Ascending aorta (tissue), 2 donors: ENCODE measurements at regions of chr1 and their contacts with region 1.

Region 1: GRCh38 chr1:154272217-154272998 is at the start of gene HAX1:
- DNase-seq: peak; percentile 87 to 97
- H3K4me3 ChIP-seq: peak within 1 kb of the TSS; percentile 75 to 97
- H3K27ac ChIP-seq: peak within 1 kb of the TSS; percentile 81 to 96
- H3K4me1 ChIP-seq: peaks cover 0 to 5% of the 10 kb centered on the region in 2 donors
- H3K27me3 ChIP-seq: no peaks in the 10 kb centered on the region
- CTCF ChIP-seq: peak; percentile 75 to 90 (median 89)
- total RNA-seq, gene HAX1: 270 TPM

Region 2: GRCh38 chr1:154183045-154183915 is 89.1 kb before region 1 on chr1:
- intact Hi-C with region 1: loop called (anchors 5 kb)
- DNase-seq: peak; percentile 85 to 98
- H3K4me3 ChIP-seq: peak overlapping the region; percentile 76 to 88
- H3K27ac ChIP-seq: peak overlapping the region; percentile 81 to 89
- H3K4me1 ChIP-seq: peaks cover 17 to 32% of the 10 kb centered on the region in 2 donors
- H3K27me3 ChIP-seq: no peaks in the 10 kb centered on the region
- CTCF ChIP-seq: peak in 1 of 3 experiments; percentile 23

Region 3: DNA sequence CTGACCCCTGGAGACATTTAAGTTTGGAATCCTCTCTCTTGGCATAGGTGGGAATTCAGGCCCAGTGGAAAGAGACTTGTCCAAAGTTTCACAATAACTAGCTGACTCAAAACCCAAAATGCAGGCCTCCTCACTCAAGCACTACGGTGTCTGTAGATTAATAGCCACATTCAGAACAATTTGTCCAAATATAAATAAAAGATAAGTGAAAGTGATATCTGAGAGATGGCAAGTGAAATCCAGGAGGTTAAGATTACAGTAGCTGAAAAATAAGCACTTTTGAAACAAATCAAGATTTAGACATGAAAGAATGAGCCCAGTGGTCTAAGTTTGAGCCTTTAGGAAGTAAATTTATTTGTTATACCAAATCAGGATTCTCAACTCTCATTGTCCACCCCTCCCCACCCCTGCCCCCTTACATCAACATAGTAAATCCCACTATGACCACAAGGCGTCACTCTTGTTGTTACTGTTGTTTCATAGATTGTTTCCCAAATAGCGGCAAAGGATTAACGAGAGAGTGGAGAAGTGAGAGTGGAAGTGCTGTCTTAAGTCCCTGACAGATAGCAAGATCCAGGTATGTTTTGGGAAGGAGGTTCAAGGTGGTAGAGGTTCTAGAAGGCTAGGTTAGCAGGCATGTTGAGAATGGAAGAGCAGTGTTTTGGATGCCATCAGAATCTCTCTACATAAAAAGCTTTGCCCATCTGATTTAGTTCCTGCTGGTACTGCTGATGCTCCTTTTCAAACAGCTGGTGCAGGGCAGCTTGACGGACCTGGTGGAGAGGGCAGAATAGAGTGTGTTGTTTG is 73.4 kb before region 1 on chr1:
- intact Hi-C with region 1: loop called (anchors 1 kb)
- DNase-seq: peak in 1 of 2 donors; percentile 77
- H3K4me3 ChIP-seq: peak overlapping the region in 1 of 2 donors; percentile 22
- H3K27ac ChIP-seq: peak overlapping the region in 1 of 2 donors; percentile 26
- H3K4me1 ChIP-seq: no peaks in the 10 kb centered on the region
- H3K27me3 ChIP-seq: no peaks in the 10 kb centered on the region
- CTCF ChIP-seq: peak; percentile 23 to 52 (median 50)

Region 4: GRCh38 chr1:154220071-154220969 is 52.1 kb before region 1 on chr1 and contains the start of gene UBAP2L:
- intact Hi-C with region 1: loop called (anchors 1 kb)
- DNase-seq: peak; percentile 96 to 100
- H3K4me3 ChIP-seq: peak within 1 kb of the TSS; percentile 78 to 98
- H3K27ac ChIP-seq: peak within 1 kb of the TSS; percentile 96 to 98
- H3K4me1 ChIP-seq: peaks cover 20 to 25% of the 10 kb centered on the region in 2 donors
- H3K27me3 ChIP-seq: no peaks in the 10 kb centered on the region
- CTCF ChIP-seq: no peak
- total RNA-seq, gene UBAP2L: 67.8 TPM

Region 5: DNA sequence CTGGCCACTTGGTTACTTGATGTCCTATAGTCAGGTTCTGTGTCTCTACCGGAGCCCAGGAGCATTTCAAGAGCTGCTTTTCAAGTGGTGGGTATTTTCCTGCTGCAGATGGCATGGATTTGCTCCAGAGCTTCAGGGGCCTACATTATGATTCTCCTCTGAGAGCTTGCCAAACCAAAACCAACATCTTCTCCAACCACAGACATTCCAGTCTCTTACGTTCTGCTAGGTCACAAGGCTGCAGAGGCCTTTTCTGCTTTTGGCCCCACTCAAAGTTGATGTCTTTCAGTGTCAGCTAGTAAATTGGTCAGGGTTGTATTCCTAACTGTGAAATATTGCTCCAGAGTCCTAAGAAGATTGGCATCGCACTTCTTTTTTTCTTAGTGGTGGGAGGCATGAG is 33.7 kb after region 1 on chr1:
- intact Hi-C with region 1: no loop called
- DNase-seq: no peak
- H3K4me3 ChIP-seq: no peak overlapping the region
- H3K27ac ChIP-seq: no peak overlapping the region
- H3K4me1 ChIP-seq: no peaks in the 10 kb centered on the region
- H3K27me3 ChIP-seq: no peaks in the 10 kb centered on the region
- CTCF ChIP-seq: no peak

Region 6: DNA sequence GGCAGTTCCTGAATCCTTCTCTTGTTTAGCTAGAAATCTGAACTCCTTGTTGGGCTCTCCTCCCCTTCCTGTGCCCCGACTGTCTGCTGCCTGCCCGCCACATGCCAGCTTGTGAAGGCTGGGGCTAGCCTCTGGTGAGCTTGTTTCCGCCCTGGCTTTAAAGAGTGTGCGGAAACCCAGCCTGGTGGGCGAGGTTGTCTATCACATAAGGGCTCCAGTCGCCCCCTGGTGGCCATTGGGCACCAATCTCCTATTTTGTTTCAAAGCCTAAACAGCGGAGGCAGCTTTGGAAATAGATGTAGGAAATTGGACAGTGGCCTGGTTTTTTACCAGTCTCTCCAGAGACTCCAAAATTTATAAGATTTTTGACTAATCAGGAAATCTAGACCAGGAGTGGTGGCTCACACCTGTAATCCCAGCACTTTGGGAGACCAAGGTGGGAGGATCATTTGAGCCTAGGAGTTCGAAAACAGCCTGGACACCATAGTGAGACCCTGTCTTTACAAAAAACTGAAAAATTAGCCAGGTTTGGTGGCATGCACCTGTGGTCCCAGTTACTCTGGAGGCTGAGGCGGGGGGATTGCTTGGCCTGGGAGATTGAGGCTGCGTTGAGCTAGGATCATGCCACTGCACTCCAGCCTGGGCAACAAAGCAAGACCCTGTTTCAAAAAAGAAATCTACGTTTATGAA is 62.8 kb after region 1 on chr1:
- intact Hi-C with region 1: loop called (anchors 2 kb)
- DNase-seq: peak; percentile 58 to 93
- H3K4me3 ChIP-seq: no peak overlapping the region
- H3K27ac ChIP-seq: peak overlapping the region; percentile 37 to 56
- H3K4me1 ChIP-seq: no peaks in the 10 kb centered on the region
- H3K27me3 ChIP-seq: no peaks in the 10 kb centered on the region
- CTCF ChIP-seq: peak; percentile 71 to 90 (median 82)

Region 7: DNA sequence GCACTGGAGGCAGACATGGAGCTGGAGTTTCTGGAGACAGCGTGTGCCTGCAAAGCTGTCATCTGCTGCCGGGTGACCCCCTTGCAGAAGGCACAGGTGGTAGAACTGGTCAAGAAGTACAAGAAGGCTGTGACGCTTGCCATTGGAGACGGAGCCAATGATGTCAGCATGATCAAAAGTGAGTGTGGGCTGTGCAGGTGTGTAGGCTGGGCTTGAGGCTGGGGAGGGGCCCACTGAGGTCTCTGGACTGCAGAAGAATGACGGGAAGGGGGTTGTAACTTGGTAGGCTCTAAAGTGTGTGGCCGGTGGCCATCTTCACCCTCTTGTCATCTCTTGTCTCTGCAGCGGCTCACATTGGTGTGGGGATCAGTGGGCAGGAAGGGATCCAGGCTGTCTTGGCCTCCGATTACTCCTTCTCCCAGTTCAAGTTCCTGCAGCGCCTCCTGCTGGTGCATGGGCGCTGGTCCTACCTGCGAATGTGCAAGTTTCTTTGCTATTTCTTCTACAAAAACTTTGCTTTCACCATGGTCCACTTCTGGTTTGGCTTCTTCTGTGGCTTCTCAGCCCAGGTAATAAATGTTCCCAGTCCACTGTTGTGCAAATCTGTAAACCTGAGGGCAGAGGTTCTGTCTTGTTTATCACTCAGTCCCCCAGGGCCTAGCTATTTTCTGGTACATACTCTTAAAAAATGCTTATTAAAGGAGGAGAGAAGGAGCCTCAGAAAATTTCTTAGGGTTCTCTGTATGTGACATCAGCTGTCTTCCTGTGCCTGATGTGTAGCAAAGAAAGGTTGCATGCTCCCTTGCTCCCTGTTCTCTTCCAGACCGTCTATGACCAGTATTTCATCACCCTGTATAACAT is 72.8 kb after region 1 on chr1:
- intact Hi-C with region 1: no loop called
- DNase-seq: peak in 1 of 2 donors; percentile 70
- H3K4me3 ChIP-seq: no peak overlapping the region
- H3K27ac ChIP-seq: no peak overlapping the region
- H3K4me1 ChIP-seq: no peaks in the 10 kb centered on the region
- H3K27me3 ChIP-seq: no peaks in the 10 kb centered on the region
- CTCF ChIP-seq: peak; percentile 29 to 51 (median 49)

Region 8: GRCh38 chr1:155961937-155962336 is 1689.5 kb after region 1 on chr1:
- intact Hi-C with region 1: no loop called
- DNase-seq: peak; percentile 79 to 95
- H3K4me3 ChIP-seq: peak overlapping the region in 1 of 2 donors; percentile 9
- H3K27ac ChIP-seq: peak overlapping the region; percentile 89 to 92
- H3K4me1 ChIP-seq: peaks cover 9 to 36% of the 10 kb centered on the region in 2 donors
- H3K27me3 ChIP-seq: no peaks in the 10 kb centered on the region
- CTCF ChIP-seq: peak; percentile 14 to 34 (median 34)